ENCODE measurements at regions of chr14 and their contacts with region 1.

Region 1: GRCh38 chr14:89936658-89937185 is 17.8 kb downstream of the EFCAB11 start:
- DNase-seq: no peak
- H3K4me3 Mint-ChIP-seq: no peak overlapping the region
- H3K27ac Mint-ChIP-seq: no peak overlapping the region
- H3K4me1 Mint-ChIP-seq: peaks cover 2% of the 10 kb centered on the region
- H3K27me3 Mint-ChIP-seq: no peaks in the 10 kb centered on the region

Region 2: DNA sequence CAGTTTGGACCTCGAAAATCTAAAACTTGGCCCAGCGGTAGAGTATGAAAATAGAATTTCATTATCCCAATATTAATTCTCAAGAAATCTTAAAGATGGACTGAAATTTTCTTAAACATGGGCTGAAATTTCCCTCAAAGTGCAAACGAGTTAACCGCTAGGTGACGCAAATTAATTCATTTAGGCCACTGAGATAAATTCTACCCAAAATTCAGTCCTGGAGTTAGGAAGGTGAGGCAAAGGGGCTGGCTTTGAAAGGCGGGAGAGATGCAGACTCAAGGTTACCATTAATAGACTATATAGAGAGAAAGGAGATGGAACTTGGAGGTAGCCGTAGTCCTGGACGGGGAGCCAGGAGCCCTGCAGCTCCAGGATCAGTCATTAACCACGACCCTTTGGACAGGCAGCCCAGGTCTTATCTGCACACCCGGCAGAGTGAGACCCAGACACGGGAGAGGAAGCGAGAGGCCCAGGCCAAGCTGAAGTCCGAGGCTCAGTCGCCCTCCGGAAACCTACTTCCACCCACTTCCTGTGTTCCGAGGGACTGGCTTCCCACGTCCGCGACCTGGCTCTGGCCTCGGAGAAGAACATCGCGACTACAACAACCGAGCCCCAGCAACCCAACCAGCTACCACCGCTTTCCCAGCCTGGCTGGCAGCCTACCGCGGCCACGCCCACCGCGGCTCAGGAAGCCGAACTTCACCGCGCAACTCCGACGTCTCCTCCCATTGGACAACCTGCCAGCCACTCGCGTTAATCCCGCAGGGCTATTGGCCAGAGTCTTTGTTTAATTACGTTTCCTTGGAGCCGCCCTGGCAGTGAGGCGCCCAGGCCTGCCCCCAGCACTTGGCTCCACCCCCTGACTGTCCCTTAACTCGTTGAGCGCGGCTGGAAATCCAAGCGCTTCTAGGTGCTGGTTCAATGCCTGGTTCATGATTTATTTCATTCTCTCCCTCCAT is 17.6 kb after region 1 on chr14 and contains the start of gene EFCAB11:
- intact Hi-C with region 1: loop called (anchors 2 kb)
- DNase-seq: peak; percentile 99
- H3K4me3 Mint-ChIP-seq: peak within 1 kb of the TSS; percentile 90
- H3K27ac Mint-ChIP-seq: peak within 1 kb of the TSS; percentile 90
- H3K4me1 Mint-ChIP-seq: peaks cover 40% of the 10 kb centered on the region
- H3K27me3 Mint-ChIP-seq: no peaks in the 10 kb centered on the region
- total RNA-seq, gene EFCAB11: 6.8 and 7.8 TPM in 2 replicates

Region 3: DNA sequence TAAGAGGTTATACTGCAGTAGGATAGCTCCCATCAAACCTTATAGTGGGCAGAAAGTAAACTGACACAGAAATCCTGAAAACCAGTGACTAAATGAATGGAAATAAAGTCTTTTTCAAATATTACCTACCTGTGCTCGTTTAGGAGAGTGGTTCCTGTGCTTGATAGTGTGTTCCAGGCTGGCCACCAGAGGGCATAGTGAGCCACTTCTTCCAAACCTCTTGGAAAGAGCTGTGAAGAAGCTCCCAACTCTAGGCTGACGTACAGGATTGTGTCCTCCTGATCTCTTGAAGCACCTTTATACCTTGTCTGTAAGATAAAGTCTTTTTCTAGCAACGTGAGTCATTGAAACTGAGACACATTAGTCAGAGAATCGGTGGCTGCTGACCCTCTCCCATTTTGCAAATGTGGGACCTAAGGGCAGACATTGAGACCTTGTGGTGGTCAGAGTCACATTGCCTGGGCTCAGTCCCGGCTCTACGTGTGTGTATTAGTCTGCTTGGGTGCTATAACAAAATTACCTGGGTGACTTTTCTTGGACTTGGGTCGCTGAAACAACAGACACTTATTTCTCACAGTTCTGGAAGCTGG is 36.6 kb after region 1 on chr14:
- intact Hi-C with region 1: loop called (anchors 1 kb)
- DNase-seq: peak; percentile 84
- H3K4me3 Mint-ChIP-seq: no peak overlapping the region
- H3K27ac Mint-ChIP-seq: no peak overlapping the region
- H3K4me1 Mint-ChIP-seq: peaks cover 4% of the 10 kb centered on the region
- H3K27me3 Mint-ChIP-seq: no peaks in the 10 kb centered on the region

Region 4: GRCh38 chr14:90235179-90235976 is 298.7 kb after region 1 on chr14:
- intact Hi-C with region 1: loop called (anchors 1 kb)
- DNase-seq: peak; percentile 91
- H3K4me3 Mint-ChIP-seq: no peak overlapping the region
- H3K27ac Mint-ChIP-seq: no peak overlapping the region
- H3K4me1 Mint-ChIP-seq: peaks cover 3% of the 10 kb centered on the region
- H3K27me3 Mint-ChIP-seq: peaks cover 11% of the 10 kb centered on the region